B cell (primary cell): ENCODE measurements at regions of chr17 and their contacts with region 1.

Region 1: GRCh38 chr17:40622509-40622928 is 25.1 kb downstream of the SMARCE1 start:
- DNase-seq: peak; percentile 62
- ATAC-seq: peak; percentile 23
- H3K4me3 ChIP-seq: no peak overlapping the region
- H3K4me3 Mint-ChIP-seq: peak overlapping the region; percentile 69
- H3K27ac ChIP-seq: no peak overlapping the region
- H3K27ac Mint-ChIP-seq: peak overlapping the region; percentile 77
- H3K4me1 ChIP-seq: peaks cover 57 to 58% of the 10 kb centered on the region in 2 donors
- H3K4me1 Mint-ChIP-seq: peaks cover 59% of the 10 kb centered on the region
- H3K27me3 ChIP-seq: no peaks in the 10 kb centered on the region
- H3K27me3 Mint-ChIP-seq: no peaks in the 10 kb centered on the region
- CTCF ChIP-seq: no peak

Region 2: GRCh38 chr17:40551879-40552768 is 70.4 kb before region 1 on chr17:
- CTCF ChIA-PET with region 1: interaction called, 634 read pairs
- POLR2A ChIA-PET with region 1: interaction called, 10 read pairs
- intact Hi-C with region 1: no loop called
- DNase-seq: peak; percentile 52
- ATAC-seq: no peak
- H3K4me3 ChIP-seq: no peak overlapping the region
- H3K4me3 Mint-ChIP-seq: peak overlapping the region; percentile 84
- H3K27ac ChIP-seq: peak overlapping the region; percentile 83 to 98
- H3K27ac Mint-ChIP-seq: peak overlapping the region; percentile 92
- H3K4me1 ChIP-seq: peaks cover 98 to 100% of the 10 kb centered on the region in 2 donors
- H3K4me1 Mint-ChIP-seq: peaks cover 100% of the 10 kb centered on the region
- H3K27me3 ChIP-seq: no peaks in the 10 kb centered on the region
- H3K27me3 Mint-ChIP-seq: no peaks in the 10 kb centered on the region
- CTCF ChIP-seq: no peak

Region 3: GRCh38 chr17:40647624-40648383 is 25.3 kb after region 1 on chr17 and contains the start of gene SMARCE1:
- CTCF ChIA-PET with region 1: interaction called, 17 read pairs
- POLR2A ChIA-PET with region 1: interaction called, 4 read pairs
- intact Hi-C with region 1: loop called (anchors 2 kb)
- DNase-seq: peak; percentile 94
- ATAC-seq: peak; percentile 85
- H3K4me3 ChIP-seq: peak within 1 kb of the TSS; percentile 85 to 94 (median 86)
- H3K4me3 Mint-ChIP-seq: peak within 1 kb of the TSS; percentile 89
- H3K27ac ChIP-seq: peak within 1 kb of the TSS; percentile 97 to 100
- H3K27ac Mint-ChIP-seq: peak within 1 kb of the TSS; percentile 94
- H3K4me1 ChIP-seq: peaks cover 25 to 30% of the 10 kb centered on the region in 2 donors
- H3K4me1 Mint-ChIP-seq: peaks cover 38% of the 10 kb centered on the region
- H3K27me3 ChIP-seq: no peaks in the 10 kb centered on the region
- H3K27me3 Mint-ChIP-seq: no peaks in the 10 kb centered on the region
- CTCF ChIP-seq: no peak
- total RNA-seq, gene SMARCE1: 123 and 128 TPM in 2 replicates

Region 4: DNA sequence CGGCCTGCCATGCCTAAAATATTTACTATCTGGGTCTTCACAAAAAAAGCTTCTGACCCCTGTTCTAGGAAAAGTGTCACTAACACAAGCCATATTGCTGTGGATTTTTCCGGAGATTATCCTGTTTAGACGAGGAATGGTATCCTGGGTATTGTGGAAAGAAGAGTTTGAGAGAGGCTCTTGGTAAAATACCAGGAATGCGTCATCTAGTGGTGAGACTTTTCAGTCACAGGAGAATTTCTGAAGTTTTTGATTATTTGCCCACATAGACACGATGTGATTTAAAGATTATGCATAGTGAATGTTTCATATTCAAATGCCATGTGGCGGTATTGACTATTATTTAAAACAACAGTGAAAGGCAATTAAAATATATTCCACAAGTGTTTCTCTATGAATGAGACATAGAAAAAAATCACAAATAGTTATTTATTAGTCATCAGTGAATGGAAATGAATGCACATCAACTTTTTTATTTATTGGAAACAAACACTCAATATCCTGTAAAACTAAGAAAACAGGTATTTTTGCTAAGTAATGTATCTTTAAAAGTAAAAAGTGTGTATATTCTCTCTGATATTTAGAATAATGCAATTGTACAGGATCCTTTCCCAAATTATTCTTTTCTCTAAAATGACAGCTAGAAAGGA is 169.4 kb after region 1 on chr17:
- CTCF ChIA-PET with region 1: interaction called, 25 read pairs
- POLR2A ChIA-PET with region 1: no interaction called
- intact Hi-C with region 1: loop called (anchors 1 kb)
- DNase-seq: peak; percentile 25
- ATAC-seq: no peak
- H3K4me3 ChIP-seq: no peak overlapping the region
- H3K4me3 Mint-ChIP-seq: no peak overlapping the region
- H3K27ac ChIP-seq: no peak overlapping the region
- H3K27ac Mint-ChIP-seq: no peak overlapping the region
- H3K4me1 ChIP-seq: no peaks in the 10 kb centered on the region
- H3K4me1 Mint-ChIP-seq: no peaks in the 10 kb centered on the region
- H3K27me3 ChIP-seq: peaks cover 0 to 17% (median 2%) of the 10 kb centered on the region in 4 experiments
- H3K27me3 Mint-ChIP-seq: peaks cover 35% of the 10 kb centered on the region
- CTCF ChIP-seq: peak; percentile 41

Region 5: GRCh38 chr17:40803617-40804082 is 181.1 kb after region 1 on chr17:
- CTCF ChIA-PET with region 1: interaction called, 13 read pairs
- POLR2A ChIA-PET with region 1: no interaction called
- intact Hi-C with region 1: no loop called
- DNase-seq: peak; percentile 79
- ATAC-seq: peak; percentile 93
- H3K4me3 ChIP-seq: no peak overlapping the region
- H3K4me3 Mint-ChIP-seq: no peak overlapping the region
- H3K27ac ChIP-seq: no peak overlapping the region
- H3K27ac Mint-ChIP-seq: no peak overlapping the region
- H3K4me1 ChIP-seq: peaks cover 0 to 4% of the 10 kb centered on the region in 2 donors
- H3K4me1 Mint-ChIP-seq: peaks cover 3% of the 10 kb centered on the region
- H3K27me3 ChIP-seq: peaks cover 0 to 47% (median 28%) of the 10 kb centered on the region in 4 experiments
- H3K27me3 Mint-ChIP-seq: peaks cover 48% of the 10 kb centered on the region
- CTCF ChIP-seq: peak; percentile 94

Region 6: DNA sequence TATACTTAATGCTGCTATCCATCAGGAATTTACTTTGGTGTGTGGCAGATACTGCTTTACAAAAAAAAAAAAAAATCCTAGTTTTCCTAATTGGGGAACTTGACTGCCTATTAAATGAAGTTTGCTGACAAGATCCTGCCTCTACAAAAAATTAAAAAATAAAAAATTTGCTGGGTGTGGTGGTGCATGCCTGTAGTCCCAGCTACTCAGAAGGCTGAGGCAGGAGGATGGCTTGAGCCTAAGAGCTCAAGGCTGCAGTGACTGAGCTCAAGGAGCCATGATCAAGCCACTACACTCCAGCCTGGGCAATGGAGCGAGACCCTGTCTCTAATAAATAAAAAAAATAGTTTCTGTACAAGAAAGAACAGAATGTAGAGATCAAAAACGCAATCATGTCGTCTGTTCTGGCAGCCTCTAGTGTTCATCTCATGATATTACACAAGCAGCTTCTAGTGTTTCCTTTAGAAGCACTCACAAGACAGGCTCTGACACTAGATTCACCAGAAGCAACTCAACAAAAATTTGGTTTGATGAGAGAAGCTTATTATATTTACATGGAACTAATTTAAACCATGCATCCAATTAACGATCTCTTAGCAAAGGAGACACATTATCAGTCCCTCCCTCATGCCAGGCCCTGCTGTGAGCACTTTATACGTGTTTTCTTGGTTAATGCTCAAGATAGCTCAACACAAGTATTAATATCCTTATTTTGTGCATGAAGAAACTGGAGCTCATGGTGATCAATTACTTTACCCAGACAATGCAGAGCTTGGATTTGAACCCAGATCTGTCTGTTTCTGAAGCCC is 699.8 kb after region 1 on chr17:
- CTCF ChIA-PET with region 1: interaction called, 7 read pairs
- POLR2A ChIA-PET with region 1: no interaction called
- intact Hi-C with region 1: loop called (anchors 5 kb)
- DNase-seq: peak; percentile 71
- ATAC-seq: peak; percentile 64
- H3K4me3 ChIP-seq: no peak overlapping the region
- H3K4me3 Mint-ChIP-seq: no peak overlapping the region
- H3K27ac ChIP-seq: no peak overlapping the region
- H3K27ac Mint-ChIP-seq: no peak overlapping the region
- H3K4me1 ChIP-seq: peaks cover 0 to 4% of the 10 kb centered on the region in 2 donors
- H3K4me1 Mint-ChIP-seq: peaks cover 3% of the 10 kb centered on the region
- H3K27me3 ChIP-seq: peaks cover 0 to 3% (median 0%) of the 10 kb centered on the region in 4 experiments
- H3K27me3 Mint-ChIP-seq: no peaks in the 10 kb centered on the region
- CTCF ChIP-seq: peak; percentile 84